Right ventricle myocardium inferior (tissue), 1 donor: ENCODE measurements at regions of chr1 and their contacts with region 1.

Region 1: DNA sequence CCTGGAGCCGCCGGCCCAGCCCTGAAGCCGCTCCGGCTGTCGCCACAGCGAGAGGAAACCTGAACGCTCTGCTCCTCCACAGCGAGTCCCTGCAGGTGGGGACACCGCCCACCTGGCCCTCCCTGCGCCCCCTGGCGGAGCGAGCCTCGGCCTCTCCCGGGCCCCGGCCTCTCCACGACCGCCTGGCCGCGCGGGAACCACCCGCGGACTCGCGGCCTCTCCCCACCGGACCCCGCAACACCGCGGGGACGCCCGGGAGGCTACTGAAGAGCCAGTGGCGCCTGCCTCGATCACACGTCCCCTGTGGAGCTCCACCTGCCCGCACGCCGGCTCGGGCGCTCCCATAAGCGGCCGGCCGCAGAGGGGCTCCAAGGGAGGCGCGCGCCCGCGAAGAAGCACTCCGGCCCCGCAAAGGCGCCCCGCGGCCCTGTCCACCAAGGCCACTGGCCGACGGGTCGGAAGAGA is 109.6 kb downstream of the KCNN3 start:
- DNase-seq: peak; percentile 86
- ATAC-seq: peak; percentile 79

Region 2: GRCh38 chr1:154669464-154670282 is 90.8 kb before region 1 on chr1:
- intact Hi-C with region 1: loop called (anchors 2 kb)
- DNase-seq: peak; percentile 81
- ATAC-seq: peak; percentile 96

Region 3: GRCh38 chr1:154809436-154810413 is 49.2 kb after region 1 on chr1:
- intact Hi-C with region 1: loop called (anchors 5 kb)
- DNase-seq: no peak
- ATAC-seq: no peak

Region 4: DNA sequence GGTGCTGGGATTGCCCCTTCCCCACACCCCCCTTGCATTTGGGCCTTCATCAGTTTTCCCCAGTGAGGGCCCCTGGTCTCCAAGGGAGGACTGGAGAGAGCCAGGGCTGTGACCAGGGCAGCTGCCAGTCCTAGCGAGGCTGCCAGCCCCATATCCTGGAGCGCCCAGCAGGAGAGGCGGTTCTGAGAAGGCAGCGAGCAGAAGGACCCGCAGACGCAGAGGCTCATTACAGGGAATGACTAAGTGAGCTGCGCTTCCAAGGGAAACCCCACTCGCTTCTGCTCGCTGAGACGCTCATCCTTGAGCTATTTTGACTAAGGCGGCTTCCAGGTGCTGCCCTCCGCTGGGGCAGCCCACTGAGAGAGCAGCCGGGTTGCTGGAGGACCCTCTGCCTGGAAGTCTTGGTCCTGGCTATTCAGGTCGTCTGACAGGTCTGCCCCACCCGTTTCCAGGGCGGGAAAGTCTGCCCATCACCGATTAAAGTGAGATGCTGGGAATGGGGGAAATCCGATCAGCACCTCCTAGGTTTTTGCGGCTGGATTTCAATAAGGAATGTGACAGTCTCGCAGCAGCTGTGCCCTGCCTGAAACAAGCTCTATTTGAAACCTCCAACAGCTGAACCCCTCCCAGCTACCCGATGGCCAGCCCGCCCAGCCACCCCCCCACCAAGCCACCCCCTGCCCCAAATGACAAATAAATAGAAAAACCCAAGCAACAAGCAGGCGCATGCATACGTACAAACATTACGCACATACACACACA is 106.7 kb after region 1 on chr1:
- intact Hi-C with region 1: loop called (anchors 2 kb)
- DNase-seq: no peak
- ATAC-seq: no peak

Region 5: GRCh38 chr1:155167166-155168104 is 406.9 kb after region 1 on chr1:
- intact Hi-C with region 1: no loop called
- DNase-seq: peak; percentile 93
- ATAC-seq: peak; percentile 82